T-cell (primary cell): ENCODE measurements at regions of chr1 and their contacts with region 1.

Region 1: DNA sequence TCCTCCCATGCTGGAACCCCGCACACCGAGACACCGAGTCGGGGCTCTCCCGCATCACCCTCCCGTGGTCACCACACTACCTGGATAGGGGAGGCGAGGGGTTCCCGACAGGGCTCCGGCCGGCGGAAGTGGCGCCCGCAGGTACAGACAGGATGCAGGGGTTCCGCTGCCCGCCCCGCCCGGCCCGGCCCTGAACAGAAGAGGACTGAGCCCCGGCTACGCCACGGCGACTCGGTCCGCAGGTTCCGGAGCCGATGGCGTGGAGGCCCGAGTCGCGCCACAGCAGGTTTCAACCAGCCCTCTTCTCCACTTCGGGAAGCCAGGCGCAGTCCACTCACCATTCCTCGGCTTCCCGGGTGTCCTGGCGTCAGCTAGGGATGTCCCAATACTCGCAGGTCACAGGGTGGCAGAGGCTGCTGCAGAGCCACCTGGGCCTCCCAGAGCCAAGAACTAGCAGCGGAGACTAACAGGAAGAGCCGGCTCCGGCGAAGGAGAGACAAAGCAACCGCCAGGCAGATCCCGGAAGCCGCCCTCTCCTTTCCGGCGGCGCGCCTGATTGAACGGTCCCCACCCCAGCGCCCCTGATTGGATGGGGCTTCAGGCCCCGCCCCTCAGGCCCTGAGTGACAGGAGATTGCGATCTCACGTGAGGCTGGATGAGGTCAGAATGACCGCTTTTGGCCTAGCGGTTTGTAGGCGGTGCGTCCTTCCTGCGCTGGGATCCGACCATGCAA is at the start of gene ZNF669:
- DNase-seq: peak; percentile 81 to 92 (median 89)
- ATAC-seq: peak; percentile 98 to 99 (median 99)
- H3K4me3 ChIP-seq: peak within 1 kb of the TSS; percentile 96 to 99
- H3K4me3 Mint-ChIP-seq: peak within 1 kb of the TSS; percentile 89 to 90 (median 89)
- H3K27ac ChIP-seq: peak within 1 kb of the TSS; percentile 80
- H3K27ac Mint-ChIP-seq: peak within 1 kb of the TSS; percentile 78 to 90
- H3K4me1 ChIP-seq: peaks cover 9 to 22% of the 10 kb centered on the region in 2 experiments
- H3K4me1 Mint-ChIP-seq: peaks cover 10 to 24% (median 24%) of the 10 kb centered on the region in 3 donors
- H3K27me3 ChIP-seq: peaks cover 0 to 19% of the 10 kb centered on the region in 2 experiments
- H3K27me3 Mint-ChIP-seq: peaks cover 21 to 29% of the 10 kb centered on the region in 2 donors
- total RNA-seq, gene ZNF669: 11.0 to 13.7 (median 12.8) TPM

Region 2: DNA sequence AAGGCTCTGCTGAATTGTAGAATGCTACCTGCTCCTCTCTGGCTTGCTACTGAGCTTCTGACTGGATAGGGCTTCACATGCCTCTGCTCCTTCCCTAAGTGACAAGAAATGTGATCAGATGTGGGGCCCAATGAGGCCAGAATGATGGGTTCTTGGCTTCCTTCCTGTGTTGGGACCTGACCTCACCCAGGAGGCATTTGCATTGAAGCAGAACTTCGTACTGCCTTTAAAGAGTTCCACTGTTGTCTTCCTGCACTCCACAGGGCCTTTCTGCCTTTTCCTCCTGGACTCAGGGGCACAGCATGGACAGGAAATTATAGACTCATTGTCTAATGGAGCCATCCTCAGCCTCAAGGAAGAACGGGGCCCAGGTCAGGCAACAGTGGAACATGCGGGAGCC is 39.7 kb before region 1 on chr1:
- CTCF ChIA-PET with region 1: no interaction called
- POLR2A ChIA-PET with region 1: interaction called in 1 of 2 experiments, 10 read pairs
- DNase-seq: no peak
- ATAC-seq: no peak
- H3K4me3 ChIP-seq: no peak overlapping the region
- H3K4me3 Mint-ChIP-seq: no peak overlapping the region
- H3K27ac ChIP-seq: no peak overlapping the region
- H3K27ac Mint-ChIP-seq: no peak overlapping the region
- H3K4me1 ChIP-seq: no peaks in the 10 kb centered on the region
- H3K4me1 Mint-ChIP-seq: peaks cover 0 to under 1% (median 0%) of the 10 kb centered on the region in 3 donors
- H3K27me3 ChIP-seq: no peaks in the 10 kb centered on the region
- H3K27me3 Mint-ChIP-seq: no peaks in the 10 kb centered on the region

Region 3: GRCh38 chr1:247119600-247120407 is 15.8 kb after region 1 on chr1:
- CTCF ChIA-PET with region 1: no interaction called
- POLR2A ChIA-PET with region 1: interaction called in 1 of 2 experiments, 14 read pairs
- DNase-seq: no peak
- ATAC-seq: no peak
- H3K4me3 ChIP-seq: no peak overlapping the region
- H3K4me3 Mint-ChIP-seq: no peak overlapping the region
- H3K27ac ChIP-seq: no peak overlapping the region
- H3K27ac Mint-ChIP-seq: no peak overlapping the region
- H3K4me1 ChIP-seq: no peaks in the 10 kb centered on the region
- H3K4me1 Mint-ChIP-seq: peaks cover 0 to 5% (median 2%) of the 10 kb centered on the region in 3 donors
- H3K27me3 ChIP-seq: peaks cover 0 to 5% of the 10 kb centered on the region in 2 experiments
- H3K27me3 Mint-ChIP-seq: peaks cover 0 to 3% of the 10 kb centered on the region in 2 donors

Region 4: DNA sequence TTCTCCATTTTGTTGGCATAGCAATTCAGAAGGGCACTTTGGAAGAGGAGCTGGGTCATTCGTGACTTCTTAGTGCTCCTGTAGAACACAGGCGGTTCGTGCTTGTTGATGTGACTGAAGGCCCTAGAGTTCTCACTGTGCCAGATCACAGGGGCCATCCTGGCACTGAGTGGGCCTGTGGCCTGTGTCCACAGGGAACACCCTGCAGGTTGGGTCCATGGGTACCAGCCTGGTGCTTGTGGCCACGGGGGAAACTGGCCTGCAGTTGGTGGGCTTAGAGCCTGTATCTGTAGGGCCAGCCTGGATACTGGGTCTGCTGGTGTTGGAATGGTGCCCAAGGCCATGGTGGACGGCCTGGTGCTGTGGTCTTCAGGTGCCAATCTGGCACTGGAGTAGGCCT is 510.6 kb after region 1 on chr1:
- CTCF ChIA-PET with region 1: no interaction called
- POLR2A ChIA-PET with region 1: no interaction called
- DNase-seq: no peak
- ATAC-seq: no peak
- H3K4me3 ChIP-seq: no peak overlapping the region
- H3K4me3 Mint-ChIP-seq: no peak overlapping the region
- H3K27ac ChIP-seq: no peak overlapping the region
- H3K27ac Mint-ChIP-seq: no peak overlapping the region
- H3K4me1 ChIP-seq: no peaks in the 10 kb centered on the region
- H3K4me1 Mint-ChIP-seq: no peaks in the 10 kb centered on the region
- H3K27me3 ChIP-seq: no peaks in the 10 kb centered on the region
- H3K27me3 Mint-ChIP-seq: peaks cover 0 to under 1% of the 10 kb centered on the region in 2 donors